Gastrocnemius medialis (tissue), 4 donors: ENCODE measurements at regions of chr13 and their contacts with region 1.

Region 1: DNA sequence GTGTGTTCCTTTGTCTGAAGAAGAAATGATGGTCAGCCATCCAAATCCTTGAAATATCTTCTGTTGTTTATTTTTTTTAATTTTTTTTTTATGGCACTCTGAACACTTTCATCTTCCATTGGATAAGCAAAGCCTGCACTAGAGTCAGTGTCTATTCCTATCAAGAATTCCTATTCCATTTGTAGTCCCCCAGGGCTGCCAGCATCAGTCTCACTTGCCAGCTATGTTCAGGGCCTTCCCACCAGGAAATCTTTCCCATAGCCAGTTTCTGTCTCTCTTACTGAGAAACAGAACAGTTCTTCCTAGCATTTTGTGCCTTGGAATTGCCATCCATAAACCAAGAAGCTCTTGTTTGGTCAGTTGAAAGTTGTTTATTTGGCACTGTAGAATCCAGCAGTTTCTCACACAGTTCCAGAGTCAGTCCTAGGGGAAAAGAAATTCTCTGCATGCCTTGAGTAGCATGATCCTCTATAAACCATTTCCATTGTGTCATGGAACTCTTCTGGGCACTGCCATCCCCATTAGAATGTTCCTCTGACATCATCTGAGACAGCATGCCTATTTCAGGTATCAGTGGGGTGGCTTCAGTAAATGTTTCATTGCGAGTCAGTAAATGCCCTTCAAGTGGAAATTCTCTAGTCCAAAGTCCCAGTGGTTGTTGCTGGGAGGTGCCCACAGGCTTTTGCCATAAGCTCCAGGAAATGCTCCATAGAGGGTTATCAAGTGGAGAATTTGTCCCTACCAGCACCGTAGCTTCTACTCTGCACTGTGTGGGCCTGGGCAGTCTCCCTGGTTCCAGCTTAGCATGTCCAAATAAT is 18.7 kb upstream of the SPRYD7 start:
- DNase-seq: no peak
- ATAC-seq: no peak
- H3K4me3 ChIP-seq: no peak overlapping the region
- H3K27ac ChIP-seq: no peak overlapping the region
- H3K4me1 ChIP-seq: peaks cover 0 to 5% of the 10 kb centered on the region in 2 donors
- H3K27me3 ChIP-seq: no peaks in the 10 kb centered on the region
- CTCF ChIP-seq: no peak
- POLR2A ChIP-seq: no peak

Region 2: GRCh38 chr13:49908637-49909036 is 46.2 kb before region 1 on chr13:
- in situ Hi-C with region 1: loop called in 1 of 4 experiments (anchors 5 kb)
- intact Hi-C with region 1: no loop called
- DNase-seq: no peak
- ATAC-seq: no peak
- H3K4me3 ChIP-seq: no peak overlapping the region
- H3K27ac ChIP-seq: no peak overlapping the region
- H3K4me1 ChIP-seq: no peaks in the 10 kb centered on the region
- H3K27me3 ChIP-seq: no peaks in the 10 kb centered on the region
- CTCF ChIP-seq: no peak
- POLR2A ChIP-seq: no peak

Region 3: GRCh38 chr13:50801087-50801931 is 846.4 kb after region 1 on chr13:
- in situ Hi-C with region 1: loop called in 1 of 4 experiments (anchors 25 kb)
- intact Hi-C with region 1: no loop called
- DNase-seq: peak; percentile 6 to 20
- ATAC-seq: peak; percentile 75 to 95
- H3K4me3 ChIP-seq: no peak overlapping the region
- H3K27ac ChIP-seq: no peak overlapping the region
- H3K4me1 ChIP-seq: peaks cover 5 to 15% of the 10 kb centered on the region in 2 donors
- H3K27me3 ChIP-seq: no peaks in the 10 kb centered on the region
- CTCF ChIP-seq: peak; percentile 39 to 69 (median 64)
- POLR2A ChIP-seq: no peak

Region 4: GRCh38 chr13:50911937-50912795 is 957.3 kb after region 1 on chr13:
- in situ Hi-C with region 1: loop called in 1 of 4 experiments (anchors 25 kb)
- intact Hi-C with region 1: no loop called
- DNase-seq: peak; percentile 52 to 71
- ATAC-seq: peak; percentile 25 to 43
- H3K4me3 ChIP-seq: no peak overlapping the region
- H3K27ac ChIP-seq: no peak overlapping the region
- H3K4me1 ChIP-seq: peaks cover 14 to 15% of the 10 kb centered on the region in 2 donors
- H3K27me3 ChIP-seq: no peaks in the 10 kb centered on the region
- CTCF ChIP-seq: peak; percentile 49 to 89 (median 71)
- POLR2A ChIP-seq: no peak

Region 5: GRCh38 chr13:51070005-51070649 is 1115.2 kb after region 1 on chr13:
- in situ Hi-C with region 1: loop called in 1 of 4 experiments (anchors 25 kb)
- intact Hi-C with region 1: no loop called
- DNase-seq: peak; percentile 32 to 51
- ATAC-seq: peak; percentile 60 to 79
- H3K4me3 ChIP-seq: no peak overlapping the region
- H3K27ac ChIP-seq: no peak overlapping the region
- H3K4me1 ChIP-seq: no peaks in the 10 kb centered on the region
- H3K27me3 ChIP-seq: no peaks in the 10 kb centered on the region
- CTCF ChIP-seq: peak; percentile 56 to 90 (median 78)
- POLR2A ChIP-seq: no peak